ENCODE measurements at regions of chr1 and their contacts with region 1.

Region 1: GRCh38 chr1:46309401-46310159 is 6.1 kb downstream of the UQCRH start:
- DNase-seq: no peak
- ATAC-seq: no peak
- H3K4me3 ChIP-seq: peak overlapping the region; percentile 66; the same call in 1 of the 2 replicates
- H3K27ac ChIP-seq: no peak overlapping the region
- H3K4me1 ChIP-seq: peaks cover 11% of the 10 kb centered on the region
- H3K27me3 ChIP-seq: no peaks in the 10 kb centered on the region
- CTCF ChIP-seq: no peak
- EP300 ChIP-seq: no peak
- POLR2A ChIP-seq: no peak
- RAD21 ChIP-seq: no peak

Region 2: DNA sequence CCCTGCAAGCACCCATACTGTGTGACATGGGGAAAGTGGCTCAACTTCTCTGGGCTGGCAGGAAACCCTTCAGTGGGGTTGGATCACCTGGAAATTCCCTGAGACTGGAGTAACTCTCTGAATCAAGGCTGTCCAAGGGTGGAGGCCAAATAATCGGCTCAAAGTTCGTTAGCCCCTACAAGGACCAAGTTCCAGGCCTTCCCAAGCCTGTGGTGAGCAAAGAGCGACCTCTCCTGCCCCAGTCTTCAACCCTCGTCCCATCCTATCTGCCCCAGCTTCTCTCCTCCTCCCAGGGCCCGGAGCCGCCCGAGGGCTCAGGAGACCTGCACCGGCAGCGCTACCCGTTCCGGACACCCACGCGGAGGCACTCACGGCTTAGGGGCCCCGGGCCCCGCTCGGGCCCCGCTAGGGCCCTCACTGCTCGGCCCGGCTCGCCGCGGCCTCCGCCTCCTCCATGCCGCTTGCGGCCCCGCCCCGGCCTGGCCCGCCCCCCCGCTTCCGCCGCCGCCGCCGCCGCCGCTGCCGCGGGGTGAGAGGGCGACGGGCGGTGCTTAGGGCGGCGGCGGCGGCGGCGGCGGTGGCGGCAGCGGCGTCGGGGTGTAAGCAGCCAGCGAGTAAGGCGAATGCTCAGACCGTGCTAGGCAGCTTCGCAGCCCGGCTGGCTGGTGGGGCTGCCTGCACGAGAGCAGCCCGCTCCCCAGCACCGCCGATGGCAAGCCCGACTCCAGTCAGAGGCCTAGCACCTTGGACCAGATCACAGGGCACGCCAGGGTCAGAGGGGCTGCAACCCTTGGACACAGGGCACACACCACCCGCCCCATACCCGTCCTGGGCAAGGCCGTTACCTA is 111.4 kb before region 1 on chr1 and contains the start of gene POMGNT1:
- CTCF ChIA-PET with region 1: no interaction called
- POLR2A ChIA-PET with region 1: no interaction called
- RAD21 ChIA-PET with region 1: no interaction called
- SMC1A ChIA-PET with region 1: no interaction called
- in situ Hi-C with region 1: no loop called
- intact Hi-C with region 1: no loop called
- DNase-seq: no peak
- ATAC-seq: peak; percentile 94
- H3K4me3 ChIP-seq: peak within 1 kb of the TSS; percentile 98
- H3K27ac ChIP-seq: peak within 1 kb of the TSS; percentile 59
- H3K4me1 ChIP-seq: peaks cover 9% of the 10 kb centered on the region
- H3K27me3 ChIP-seq: no peaks in the 10 kb centered on the region
- CTCF ChIP-seq: peak in 2 of 3 experiments; percentile 20 to 21; a peak in 2 of 6 replicates
- EP300 ChIP-seq: no peak
- POLR2A ChIP-seq: peak; percentile 93
- RAD21 ChIP-seq: peak; percentile 28; the same call in 1 of the 2 replicates
- polyA plus RNA-seq, gene POMGNT1: 8.6 to 29.0 TPM

Region 3: DNA sequence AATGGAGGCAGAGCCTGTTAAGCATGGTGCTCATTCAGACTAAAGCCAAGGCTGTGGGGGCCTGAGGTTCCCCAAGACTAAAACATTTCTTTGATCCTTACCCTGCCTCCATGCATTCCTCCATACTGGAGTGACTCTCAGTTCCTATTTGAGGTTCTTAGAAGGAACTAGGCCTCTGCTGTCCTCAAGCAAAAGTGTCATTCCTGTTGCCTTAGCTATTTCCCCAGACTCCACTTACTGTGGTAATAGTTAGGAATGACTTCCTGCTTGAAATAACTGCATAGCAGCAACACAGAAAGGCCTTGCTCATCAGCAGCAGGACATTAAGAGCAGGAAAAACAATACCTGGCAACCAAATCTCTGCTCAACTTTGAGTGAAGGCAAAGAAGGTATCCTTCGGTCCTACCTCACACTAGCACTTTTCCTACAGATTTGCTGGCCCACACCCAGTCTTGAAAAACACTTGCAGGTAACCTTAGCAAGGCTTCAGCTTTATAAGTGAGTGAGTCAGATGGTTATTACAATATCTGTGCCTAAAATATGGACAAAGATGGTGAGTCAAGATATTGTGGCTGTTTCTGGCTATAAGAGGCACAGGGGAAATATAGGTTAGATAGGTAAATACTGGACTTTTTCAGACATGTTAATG is 21.0 kb before region 1 on chr1:
- CTCF ChIA-PET with region 1: no interaction called
- POLR2A ChIA-PET with region 1: no interaction called
- RAD21 ChIA-PET with region 1: no interaction called
- SMC1A ChIA-PET with region 1: no interaction called
- in situ Hi-C with region 1: no loop called
- intact Hi-C with region 1: no loop called
- DNase-seq: no peak
- ATAC-seq: no peak
- H3K4me3 ChIP-seq: no peak overlapping the region
- H3K27ac ChIP-seq: no peak overlapping the region
- H3K4me1 ChIP-seq: no peaks in the 10 kb centered on the region
- H3K27me3 ChIP-seq: no peaks in the 10 kb centered on the region
- CTCF ChIP-seq: no peak
- EP300 ChIP-seq: no peak
- POLR2A ChIP-seq: no peak; the same call in 1 of the 2 replicates
- RAD21 ChIP-seq: no peak

Region 4: DNA sequence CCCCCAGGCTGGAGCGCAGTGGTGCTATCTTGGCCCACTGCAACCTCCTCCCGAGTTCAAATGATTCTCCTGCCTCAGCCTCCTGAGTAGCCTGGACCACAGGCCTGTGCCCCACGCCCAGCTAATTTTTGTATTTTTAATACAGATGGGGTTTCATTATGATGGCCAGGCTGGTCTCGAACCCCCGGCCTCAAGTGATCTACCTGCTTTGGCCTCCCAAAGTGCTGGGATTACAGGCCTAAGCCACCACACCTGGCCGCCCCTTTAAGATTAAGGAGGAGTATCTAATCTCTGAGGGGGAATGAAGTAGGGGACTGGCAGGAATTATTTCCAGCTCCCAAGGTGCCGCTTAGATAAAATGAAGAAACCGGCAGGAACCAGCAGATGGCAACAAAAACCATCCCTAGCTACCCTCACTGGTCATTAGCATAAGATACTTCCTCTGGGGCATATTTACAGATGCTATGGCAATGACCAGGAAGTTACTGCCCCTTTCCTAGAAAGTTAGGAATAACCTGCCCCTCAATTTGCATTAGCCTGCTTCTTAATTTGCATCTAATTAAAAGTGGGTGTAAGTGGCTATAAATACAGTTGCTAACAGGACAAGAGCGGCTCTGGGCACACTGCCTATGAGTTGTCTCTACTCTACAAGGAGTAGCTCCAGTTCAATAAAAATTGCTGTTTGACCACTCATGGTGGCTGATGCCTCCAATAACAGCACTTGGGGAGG is 23.9 kb after region 1 on chr1:
- CTCF ChIA-PET with region 1: interaction called, 59 read pairs
- POLR2A ChIA-PET with region 1: interaction called, 37 read pairs
- RAD21 ChIA-PET with region 1: interaction called, 48 read pairs
- SMC1A ChIA-PET with region 1: interaction called, 46 read pairs
- in situ Hi-C with region 1: no loop called
- intact Hi-C with region 1: no loop called
- DNase-seq: peak; percentile 77
- ATAC-seq: peak; percentile 58
- H3K4me3 ChIP-seq: peak overlapping the region; percentile 16; the same call in 1 of the 2 replicates
- H3K27ac ChIP-seq: peak overlapping the region; percentile 98
- H3K4me1 ChIP-seq: peaks cover 22% of the 10 kb centered on the region
- H3K27me3 ChIP-seq: no peaks in the 10 kb centered on the region
- CTCF ChIP-seq: peak; percentile 49 to 73 (median 53)
- EP300 ChIP-seq: 0 out of 4 replicates have a peak, but pooled peaks of 1 of the 2 experiments have one; percentile 17
- POLR2A ChIP-seq: peak; percentile 77
- RAD21 ChIP-seq: peak; percentile 70

Region 5: DNA sequence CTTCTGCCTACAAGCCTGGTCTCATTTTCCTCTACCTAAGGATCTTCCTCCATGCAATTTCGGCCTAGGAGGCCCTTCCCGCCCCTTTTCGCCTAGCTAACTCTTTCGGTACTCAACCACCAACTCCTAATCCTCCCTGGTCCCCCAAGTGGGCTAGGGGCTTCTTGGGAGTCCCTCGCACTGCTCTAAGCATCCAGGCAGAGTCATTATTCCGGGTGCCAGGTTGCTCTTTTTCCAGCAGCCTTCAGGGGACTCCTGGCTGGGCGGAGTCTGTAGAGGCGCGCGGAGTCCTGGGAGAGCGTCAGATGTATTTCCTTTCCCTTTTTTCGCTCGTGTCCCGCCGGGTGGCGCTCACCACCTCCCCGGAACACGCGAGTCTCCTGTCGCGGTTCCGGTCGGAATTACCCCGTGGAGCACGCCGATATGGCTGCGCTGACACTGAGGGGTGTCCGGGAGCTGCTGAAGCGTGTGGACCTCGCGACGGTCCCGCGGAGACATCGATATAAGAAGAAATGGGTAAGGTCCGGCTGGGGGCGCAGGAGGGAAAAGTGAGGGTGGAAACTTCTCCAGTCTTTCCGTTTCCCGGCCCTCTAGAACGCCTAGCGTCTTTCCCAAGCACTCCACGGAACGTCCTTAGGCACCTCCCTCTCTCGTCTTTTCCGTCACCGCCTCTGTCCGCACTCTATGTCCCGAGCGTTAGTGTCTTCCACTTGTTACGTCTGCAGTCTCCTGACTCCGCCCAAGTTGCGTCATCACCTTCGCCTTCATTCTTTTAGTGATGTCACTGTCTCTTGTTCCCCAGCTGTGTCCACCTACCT is 31.0 kb after region 1 on chr1 and contains the start of gene NSUN4:
- CTCF ChIA-PET with region 1: interaction called, 181 read pairs
- POLR2A ChIA-PET with region 1: interaction called, 45 read pairs
- RAD21 ChIA-PET with region 1: interaction called, 49 read pairs
- SMC1A ChIA-PET with region 1: interaction called, 30 read pairs
- in situ Hi-C with region 1: loop called (anchors 5 kb)
- intact Hi-C with region 1: no loop called
- DNase-seq: peak; percentile 69
- ATAC-seq: peak; percentile 85
- H3K4me3 ChIP-seq: peak within 1 kb of the TSS; percentile 80
- H3K27ac ChIP-seq: peak within 1 kb of the TSS; percentile 97
- H3K4me1 ChIP-seq: peaks cover 16% of the 10 kb centered on the region; the same call in 1 of the 2 replicates
- H3K27me3 ChIP-seq: no peaks in the 10 kb centered on the region
- CTCF ChIP-seq: peak; percentile 64 to 87 (median 70)
- EP300 ChIP-seq: no peak; a peak in 1 of 4 replicates
- POLR2A ChIP-seq: peak; percentile 90
- RAD21 ChIP-seq: peak; percentile 20; the same call in 1 of the 2 replicates
- polyA plus RNA-seq, gene NSUN4: 22.1 to 26.6 TPM